Mammary epithelial cell (primary cell): ENCODE measurements at regions of chr4 and their contacts with region 1.

Region 1: GRCh38 chr4:137474711-137475301 is 57.5 kb downstream of the PCDH18 start:
- DNase-seq: no peak
- H3K4me3 ChIP-seq: no peak overlapping the region
- H3K27ac ChIP-seq: no peak overlapping the region
- H3K4me1 ChIP-seq: no peaks in the 10 kb centered on the region
- H3K27me3 ChIP-seq: no peaks in the 10 kb centered on the region
- CTCF ChIP-seq: no peak

Region 2: DNA sequence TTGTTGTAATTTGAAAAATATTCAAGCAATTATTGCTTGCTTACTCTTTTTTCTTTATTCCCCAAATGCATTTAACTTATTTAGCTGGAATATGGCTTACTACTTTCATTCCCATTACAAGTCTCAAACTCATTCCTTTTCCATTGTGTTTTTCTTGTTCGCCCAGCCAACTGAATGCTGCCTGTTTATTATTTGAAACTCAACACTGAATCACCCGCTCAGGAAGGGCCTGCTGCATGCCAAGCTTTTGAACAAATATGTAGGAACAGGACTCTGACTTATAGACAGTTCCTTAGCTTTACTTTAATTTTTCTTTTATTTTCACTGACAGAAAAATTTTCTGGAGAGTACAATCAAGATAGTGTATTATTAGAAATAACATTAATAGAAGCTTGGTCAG is 44.6 kb after region 1 on chr4:
- CTCF ChIA-PET with region 1: no interaction called
- dilution Hi-C with region 1: no loop called
- in situ Hi-C with region 1: no loop called
- intact Hi-C with region 1: no loop called
- DNase-seq: no peak
- H3K4me3 ChIP-seq: no peak overlapping the region
- H3K27ac ChIP-seq: no peak overlapping the region
- H3K4me1 ChIP-seq: no peaks in the 10 kb centered on the region
- H3K27me3 ChIP-seq: no peaks in the 10 kb centered on the region
- CTCF ChIP-seq: no peak

Region 3: DNA sequence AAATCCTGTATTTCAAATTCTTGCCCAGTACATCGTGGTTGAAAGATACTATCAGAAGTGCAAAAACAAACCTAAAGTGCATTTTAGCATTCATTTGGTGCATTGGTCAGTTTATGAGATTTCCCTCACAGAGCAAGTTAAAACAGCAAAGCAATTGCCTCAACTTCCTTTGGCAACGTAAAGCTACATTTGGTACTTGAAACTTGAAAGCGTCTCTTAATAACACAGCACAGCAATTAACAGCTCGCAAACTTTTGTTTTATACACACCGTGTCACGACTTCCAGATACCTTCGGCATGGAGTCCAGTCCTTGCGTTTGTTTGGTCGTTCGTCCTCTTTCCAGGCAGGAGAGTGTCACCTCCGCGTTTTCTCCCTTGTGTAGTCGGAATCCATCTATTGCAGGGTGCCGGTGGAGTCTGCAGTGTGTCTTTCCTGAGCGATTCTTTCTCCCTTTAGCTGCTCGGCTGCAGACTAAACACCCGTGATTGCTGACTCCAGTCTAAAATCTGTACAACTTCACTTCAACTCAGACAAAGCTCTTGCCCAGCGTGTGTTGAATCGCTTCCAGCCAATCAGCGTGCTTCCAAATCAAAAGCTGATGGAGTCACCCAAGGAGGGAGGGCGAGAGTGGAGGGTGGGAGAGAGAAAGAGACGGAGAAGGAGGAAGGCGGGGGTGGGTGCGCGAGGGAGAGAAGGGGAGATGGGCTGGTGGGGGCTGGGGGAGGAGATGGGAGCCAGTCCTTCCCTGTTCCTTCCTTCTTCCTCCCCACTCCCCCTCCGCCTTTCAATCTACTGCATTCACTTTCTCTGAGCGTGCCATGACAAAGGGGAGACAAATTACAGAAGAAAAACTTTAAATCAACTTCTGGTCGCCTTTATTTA is 57.4 kb after region 1 on chr4 and contains the start of gene PCDH18:
- CTCF ChIA-PET with region 1: no interaction called
- dilution Hi-C with region 1: loop called (anchors 10 kb)
- in situ Hi-C with region 1: no loop called
- intact Hi-C with region 1: no loop called
- DNase-seq: peak; percentile 15
- H3K4me3 ChIP-seq: peak within 1 kb of the TSS; percentile 2 to 35 (median 17)
- H3K27ac ChIP-seq: no peak within 1 kb of the TSS
- H3K4me1 ChIP-seq: no peaks in the 10 kb centered on the region
- H3K27me3 ChIP-seq: peaks cover 2% of the 10 kb centered on the region
- CTCF ChIP-seq: no peak
- total RNA-seq, gene PCDH18: 0.12 to 1.2 TPM